ENCODE measurements at regions of chr5 and their contacts with region 1.

Region 1: GRCh38 chr5:6712577-6713275 is 506 bp upstream of the TENT4A start:
- DNase-seq: peak; percentile 96
- H3K4me3 ChIP-seq: peak overlapping the region; percentile 60 to 74 (median 65)
- H3K27ac ChIP-seq: peak overlapping the region; percentile 73
- H3K4me1 ChIP-seq: peaks cover 21% of the 10 kb centered on the region
- H3K27me3 ChIP-seq: no peaks in the 10 kb centered on the region
- CTCF ChIP-seq: no peak

Region 2: DNA sequence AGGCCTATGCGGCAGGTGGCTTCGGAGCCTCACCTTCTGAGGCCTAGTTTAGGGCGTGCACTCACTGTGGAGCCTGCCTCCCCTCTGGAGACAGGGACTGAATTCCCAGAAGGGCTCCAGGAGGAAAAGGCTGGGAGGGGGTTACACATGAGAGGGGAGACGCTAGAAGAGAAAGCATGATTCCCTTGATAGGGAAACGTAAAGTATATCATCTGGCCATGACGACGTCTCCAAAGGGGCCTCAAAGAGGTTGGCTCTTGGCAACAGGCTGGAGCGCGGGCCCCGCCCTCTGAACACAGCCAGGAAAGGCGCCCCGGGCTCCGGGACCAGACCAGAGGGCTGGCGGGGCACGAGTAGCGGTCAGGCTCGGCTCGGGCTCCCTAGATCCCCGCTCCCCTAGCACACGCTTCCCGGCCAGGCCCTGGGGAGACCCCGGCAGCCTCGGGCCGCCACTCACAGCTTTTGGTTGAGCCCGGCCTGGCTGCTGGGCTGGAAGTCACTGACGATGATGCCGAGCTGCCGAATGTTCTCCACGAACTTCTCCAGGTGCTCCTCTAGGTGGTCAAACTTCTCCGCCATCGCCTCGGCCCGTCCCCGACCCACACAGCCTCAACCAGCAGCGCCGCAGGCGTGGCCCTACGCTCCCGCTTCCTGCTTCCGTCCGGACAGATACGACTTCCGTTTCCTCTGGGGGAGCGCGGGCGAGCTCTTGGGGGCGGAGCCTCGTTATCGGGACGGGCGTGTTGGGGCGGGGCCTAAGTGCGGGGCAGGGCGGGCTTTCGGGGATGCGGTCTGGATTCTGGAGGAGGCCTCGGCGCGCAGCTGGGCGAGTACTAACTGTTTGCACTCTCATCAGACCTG is 334.6 kb before region 1 on chr5 and contains the start of gene MED10:
- CTCF ChIA-PET with region 1: no interaction called
- dilution Hi-C with region 1: no loop called
- in situ Hi-C with region 1: no loop called
- intact Hi-C with region 1: loop called (anchors 10 kb)
- DNase-seq: peak; percentile 88
- H3K4me3 ChIP-seq: peak within 1 kb of the TSS; percentile 80 to 95 (median 91)
- H3K27ac ChIP-seq: peak within 1 kb of the TSS; percentile 74
- H3K4me1 ChIP-seq: peaks cover 13% of the 10 kb centered on the region
- H3K27me3 ChIP-seq: no peaks in the 10 kb centered on the region
- CTCF ChIP-seq: no peak
- total RNA-seq, gene MED10: 17.0 to 59.5 TPM

Region 3: GRCh38 chr5:6632917-6633468 is 79.7 kb before region 1 on chr5 and contains the starts of genes NSUN2 and SRD5A1:
- CTCF ChIA-PET with region 1: interaction called, 3 read pairs
- dilution Hi-C with region 1: no loop called
- in situ Hi-C with region 1: loop called (anchors 10 kb)
- intact Hi-C with region 1: loop called (anchors 1 kb)
- DNase-seq: peak; percentile 87
- H3K4me3 ChIP-seq: peak within 1 kb of the TSS; percentile 75 to 91 (median 87)
- H3K27ac ChIP-seq: peak within 1 kb of the TSS; percentile 95
- H3K4me1 ChIP-seq: peaks cover 45% of the 10 kb centered on the region
- H3K27me3 ChIP-seq: no peaks in the 10 kb centered on the region
- CTCF ChIP-seq: no peak
- total RNA-seq, gene NSUN2: 57.2 to 96.1 TPM
- total RNA-seq, gene SRD5A1: 21.8 to 31.8 TPM

Region 4: GRCh38 chr5:6675763-6676499 is 36.8 kb before region 1 on chr5:
- CTCF ChIA-PET with region 1: no interaction called
- dilution Hi-C with region 1: no loop called
- in situ Hi-C with region 1: no loop called
- intact Hi-C with region 1: loop called (anchors 2 kb)
- DNase-seq: no peak
- H3K4me3 ChIP-seq: no peak overlapping the region
- H3K27ac ChIP-seq: no peak overlapping the region
- H3K4me1 ChIP-seq: peaks cover 14% of the 10 kb centered on the region
- H3K27me3 ChIP-seq: no peaks in the 10 kb centered on the region
- CTCF ChIP-seq: peak in 1 of 2 donors; percentile 12

Region 5: DNA sequence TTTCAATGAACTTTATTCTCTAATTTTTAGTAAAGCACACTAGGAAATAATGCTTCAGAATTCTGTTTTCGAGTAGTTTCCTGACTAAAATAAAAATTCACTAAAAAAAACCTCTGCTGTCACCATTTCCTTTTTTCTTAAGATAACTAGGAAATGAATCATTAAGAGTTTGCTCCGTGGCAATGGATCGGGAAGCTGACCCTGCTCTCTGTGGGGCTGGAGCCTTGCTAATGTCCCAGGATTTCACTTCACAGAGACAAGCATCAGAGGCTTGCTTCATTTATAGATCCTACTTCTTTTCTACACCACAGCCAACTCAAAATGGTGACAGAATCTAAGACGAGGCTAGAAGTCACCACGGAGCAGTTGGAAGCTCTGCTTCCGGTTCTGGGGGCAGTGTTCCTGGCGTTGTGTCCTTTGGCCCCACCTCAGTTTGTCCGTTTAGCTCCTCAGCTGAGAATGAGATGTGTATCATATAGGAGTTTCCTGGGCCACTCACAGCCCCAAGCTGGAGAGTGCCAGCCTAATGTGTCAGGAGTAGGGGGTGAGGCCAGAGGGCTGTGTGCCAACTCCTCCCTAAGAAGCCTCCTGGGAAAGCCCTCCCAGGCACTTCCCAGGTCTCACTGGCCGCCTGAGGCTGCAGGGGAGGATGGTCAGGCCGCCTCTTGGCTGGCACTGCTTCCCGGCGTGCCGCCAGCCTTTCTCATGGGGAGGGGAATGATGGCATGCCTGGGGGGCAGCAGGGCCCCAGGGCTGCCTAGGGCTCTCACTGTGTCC is 20.1 kb after region 1 on chr5:
- CTCF ChIA-PET with region 1: no interaction called
- dilution Hi-C with region 1: no loop called
- in situ Hi-C with region 1: no loop called
- intact Hi-C with region 1: loop called (anchors 1 kb)
- DNase-seq: peak; percentile 58
- H3K4me3 ChIP-seq: no peak overlapping the region
- H3K27ac ChIP-seq: peak overlapping the region; percentile 56
- H3K4me1 ChIP-seq: peaks cover 24% of the 10 kb centered on the region
- H3K27me3 ChIP-seq: no peaks in the 10 kb centered on the region
- CTCF ChIP-seq: no peak

Measured in mammary epithelial cell (primary cell).